ENCODE measurements at regions of chrX and their contacts with region 1.

Region 1: DNA sequence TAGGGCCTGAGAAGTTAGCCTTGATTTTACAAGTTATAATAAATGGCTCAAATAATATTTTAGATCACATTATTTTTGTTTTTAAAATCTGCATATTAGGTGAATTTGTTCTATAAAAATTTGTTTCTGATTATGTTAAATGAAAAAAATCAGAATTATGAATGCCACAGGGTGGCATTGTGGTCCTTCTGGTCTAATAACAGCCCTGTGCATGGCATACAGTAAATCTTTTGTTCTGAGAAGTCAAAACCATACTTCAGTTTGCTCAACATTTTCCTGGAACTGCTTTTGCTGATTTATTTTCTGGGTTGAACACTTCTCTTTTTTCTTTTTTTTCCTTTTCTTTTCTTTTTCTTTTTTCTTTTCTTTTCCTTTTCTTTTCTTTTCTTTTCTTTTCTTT is 101.0 kb upstream of the UBQLN2 start:
- DNase-seq: no peak
- ATAC-seq: no peak

Region 2: DNA sequence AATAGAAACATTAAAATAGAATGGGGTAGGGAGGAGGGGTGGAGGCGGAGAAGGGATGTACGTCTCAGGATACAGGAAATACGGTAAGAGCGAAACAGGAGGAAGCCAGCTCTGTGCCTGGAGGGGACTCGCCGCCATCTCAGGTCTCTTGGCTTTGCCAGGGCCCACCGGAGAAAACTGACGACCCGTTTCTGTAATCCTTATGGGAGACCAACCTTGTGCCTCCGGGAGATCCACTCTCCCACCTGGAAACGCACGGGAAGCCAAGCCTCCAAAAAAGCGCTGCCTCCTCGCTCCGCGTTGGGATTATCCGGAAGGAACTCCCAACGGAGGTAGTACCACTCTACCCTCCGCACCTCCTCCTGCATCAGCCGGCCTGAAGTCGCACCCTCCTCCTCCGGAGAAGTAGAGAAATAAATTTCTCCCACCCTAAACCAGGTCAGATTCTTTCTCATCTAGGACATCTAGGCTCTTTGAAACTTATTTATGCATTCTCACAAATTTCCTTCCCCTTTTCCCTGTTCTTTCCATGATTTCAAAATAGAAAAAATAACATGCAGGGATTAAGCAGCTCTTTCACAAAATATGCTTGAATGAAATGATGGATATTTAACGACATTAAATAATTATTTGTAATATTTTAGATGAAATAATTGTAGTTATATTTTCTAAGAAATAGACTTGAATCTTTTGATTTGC is 266.9 kb after region 1 on chrX and contains the start of gene NBDY:
- intact Hi-C with region 1: loop called in 1 of 2 experiments (anchors 2 kb)
- DNase-seq: peak; percentile 26
- ATAC-seq: peak; percentile 89 to 97
- total RNA-seq, gene NBDY: 27.5 to 32.6 TPM

Measured in left cardiac atrium (tissue), 4 donors.